ENCODE measurements at regions of chr15 and their contacts with region 1.

Region 1: DNA sequence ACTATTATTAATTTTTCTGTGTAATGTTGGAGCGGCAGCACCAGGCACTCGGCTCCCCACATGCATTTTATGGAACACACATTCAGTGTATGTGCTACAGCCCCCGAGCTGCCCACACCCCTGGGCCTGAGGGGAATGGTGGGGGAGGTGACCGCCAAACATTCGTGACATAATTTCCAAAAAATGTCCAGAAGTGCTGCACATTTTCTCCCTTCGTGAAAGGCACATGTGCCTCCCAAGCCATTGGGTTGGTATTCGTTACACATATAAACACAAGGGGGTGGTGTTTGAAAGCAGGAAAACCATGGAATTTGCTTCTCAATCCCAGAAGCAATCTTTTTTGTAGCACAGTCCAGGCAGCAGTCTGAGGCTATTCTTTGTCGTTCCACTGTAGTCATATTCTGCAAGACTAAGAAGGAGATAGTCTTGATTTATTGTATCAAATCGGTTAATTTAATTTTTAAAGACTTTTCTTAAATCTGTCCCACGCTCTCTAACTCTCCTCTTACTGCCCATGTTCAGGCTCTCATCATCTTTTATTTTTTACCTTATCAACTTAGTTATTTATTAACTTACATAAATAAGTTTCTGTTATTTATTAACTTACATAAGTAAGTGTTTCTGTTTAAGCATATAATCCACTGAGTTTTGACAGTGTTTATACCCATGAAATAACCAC is 39.2 kb upstream of the POLR2M start:
- DNase-seq: peak in 1 of 2 donors; percentile 73
- H3K4me3 ChIP-seq: peak overlapping the region in 1 of 2 donors; percentile 20
- H3K27ac ChIP-seq: peak overlapping the region in 1 of 2 donors; percentile 29
- H3K4me1 ChIP-seq: peaks cover 0 to 4% of the 10 kb centered on the region in 2 donors
- H3K27me3 ChIP-seq: no peaks in the 10 kb centered on the region
- CTCF ChIP-seq: peak; percentile 55 to 76 (median 70)

Region 2: GRCh38 chr15:57706405-57707209 is 39.3 kb after region 1 on chr15 and contains the start of gene POLR2M:
- intact Hi-C with region 1: loop called (anchors 2 kb)
- DNase-seq: peak; percentile 89 to 99
- H3K4me3 ChIP-seq: peak within 1 kb of the TSS; percentile 77 to 87
- H3K27ac ChIP-seq: peak within 1 kb of the TSS; percentile 96 to 97
- H3K4me1 ChIP-seq: peaks cover 0 to 26% of the 10 kb centered on the region in 2 donors
- H3K27me3 ChIP-seq: no peaks in the 10 kb centered on the region
- CTCF ChIP-seq: no peak
- total RNA-seq, gene POLR2M: 24.9 TPM

Region 3: DNA sequence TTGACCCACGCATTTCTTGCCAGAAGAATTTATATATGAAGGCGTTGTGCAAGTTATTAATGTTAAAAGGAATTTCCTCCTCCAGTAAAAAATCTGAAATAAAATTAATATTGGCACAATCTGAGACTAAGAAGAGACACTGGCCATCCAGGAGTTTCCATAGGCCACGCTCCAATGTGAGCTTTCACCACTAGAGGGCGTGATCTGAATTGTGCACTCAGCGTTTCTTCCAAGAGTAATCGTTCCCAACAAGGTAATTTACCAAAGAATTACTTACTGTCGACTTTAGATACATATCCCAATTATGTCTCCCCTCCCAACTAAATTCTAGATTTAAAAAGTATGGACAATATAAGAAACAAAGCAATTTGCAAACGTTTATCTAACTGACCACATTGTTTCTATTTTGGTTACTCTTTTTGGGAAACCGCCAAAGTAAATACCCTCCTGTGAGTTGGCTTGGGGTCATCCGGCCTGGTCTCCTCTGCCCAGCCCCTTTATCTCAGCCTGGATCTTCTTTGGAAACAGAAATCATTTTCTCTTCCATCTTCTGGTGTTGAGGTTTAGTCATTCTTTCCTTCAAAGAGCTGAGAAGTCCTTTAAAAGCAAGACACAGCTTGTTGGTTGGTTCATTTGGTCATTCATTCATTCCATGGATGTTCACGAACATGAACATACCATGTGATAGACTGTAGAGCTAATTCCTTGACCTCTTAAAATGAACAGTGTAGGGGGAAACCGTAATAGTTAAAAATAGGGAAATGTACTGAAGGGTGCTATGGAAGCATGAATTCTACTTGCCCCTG is 65.4 kb after region 1 on chr15:
- intact Hi-C with region 1: loop called (anchors 5 kb)
- DNase-seq: peak in 1 of 2 donors; percentile 70
- H3K4me3 ChIP-seq: no peak overlapping the region
- H3K27ac ChIP-seq: no peak overlapping the region
- H3K4me1 ChIP-seq: no peaks in the 10 kb centered on the region
- H3K27me3 ChIP-seq: no peaks in the 10 kb centered on the region
- CTCF ChIP-seq: peak; percentile 36 to 72 (median 72)

Region 4: DNA sequence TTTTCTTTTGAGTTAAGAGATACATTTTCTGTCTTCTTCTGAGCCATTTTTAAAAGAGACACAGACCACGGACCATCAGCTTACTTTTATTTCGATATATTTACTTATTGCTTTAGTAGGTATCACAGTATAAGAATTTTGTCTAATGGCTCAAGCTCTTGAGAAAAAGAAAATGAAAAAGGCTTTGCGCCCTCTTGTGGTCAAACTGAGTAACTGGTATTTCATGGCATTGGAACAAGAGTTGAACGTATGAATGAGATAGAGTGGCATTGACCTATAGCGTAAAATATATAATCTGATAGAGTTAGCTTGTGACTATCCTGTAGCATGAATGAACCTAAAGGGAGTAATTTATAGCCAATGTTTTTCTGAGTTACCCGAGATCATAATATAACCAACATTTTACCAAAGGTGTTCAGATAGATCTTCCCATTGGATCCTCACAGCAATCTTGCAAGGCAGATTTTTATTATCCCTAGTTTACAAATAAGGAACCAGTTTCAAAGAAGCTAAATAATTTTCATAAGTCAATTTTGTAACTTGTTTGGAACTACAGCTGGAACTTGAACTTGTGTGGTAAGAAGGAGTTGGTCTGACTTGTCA is 193.8 kb after region 1 on chr15:
- intact Hi-C with region 1: loop called (anchors 1 kb)
- DNase-seq: no peak
- H3K4me3 ChIP-seq: no peak overlapping the region
- H3K27ac ChIP-seq: no peak overlapping the region
- H3K4me1 ChIP-seq: no peaks in the 10 kb centered on the region
- H3K27me3 ChIP-seq: no peaks in the 10 kb centered on the region
- CTCF ChIP-seq: peak; percentile 70 to 83 (median 75)

Region 5: DNA sequence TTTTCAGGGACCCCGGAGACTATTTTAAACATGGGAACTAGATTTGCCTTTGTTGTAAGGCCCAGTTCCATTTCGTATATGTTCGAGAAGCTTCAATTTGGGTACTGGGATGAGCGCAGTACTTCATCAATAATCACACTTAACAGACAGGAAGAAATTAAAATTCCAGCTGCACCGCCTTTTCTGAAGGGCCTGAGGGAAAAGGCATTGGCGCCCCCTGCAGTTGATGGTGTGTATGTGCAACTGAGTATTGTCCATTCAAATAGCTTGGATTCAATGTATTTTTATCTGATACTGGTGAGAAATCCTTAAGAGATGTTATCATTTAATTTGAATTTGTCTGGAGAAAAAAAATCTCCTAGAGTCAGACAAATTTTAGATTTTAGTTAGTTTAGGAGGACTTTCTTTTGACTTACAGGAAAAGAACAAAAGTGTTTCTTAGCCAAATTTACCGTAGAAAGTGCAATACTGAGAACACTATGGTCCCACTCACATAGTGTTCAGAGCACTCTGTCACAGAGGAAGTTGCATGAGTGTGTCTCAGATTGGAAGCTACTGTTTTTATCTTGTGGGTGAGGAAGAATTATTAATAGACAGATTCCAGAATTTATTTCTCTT is 403.6 kb after region 1 on chr15:
- intact Hi-C with region 1: loop called (anchors 2 kb)
- DNase-seq: no peak
- H3K4me3 ChIP-seq: no peak overlapping the region
- H3K27ac ChIP-seq: no peak overlapping the region
- H3K4me1 ChIP-seq: no peaks in the 10 kb centered on the region
- H3K27me3 ChIP-seq: no peaks in the 10 kb centered on the region
- CTCF ChIP-seq: peak; percentile 44 to 73 (median 68)

Measured in ascending aorta (tissue), 2 donors.